SK-N-SH (cell line): ENCODE measurements at regions of chr3 and their contacts with region 1.

Region 1: DNA sequence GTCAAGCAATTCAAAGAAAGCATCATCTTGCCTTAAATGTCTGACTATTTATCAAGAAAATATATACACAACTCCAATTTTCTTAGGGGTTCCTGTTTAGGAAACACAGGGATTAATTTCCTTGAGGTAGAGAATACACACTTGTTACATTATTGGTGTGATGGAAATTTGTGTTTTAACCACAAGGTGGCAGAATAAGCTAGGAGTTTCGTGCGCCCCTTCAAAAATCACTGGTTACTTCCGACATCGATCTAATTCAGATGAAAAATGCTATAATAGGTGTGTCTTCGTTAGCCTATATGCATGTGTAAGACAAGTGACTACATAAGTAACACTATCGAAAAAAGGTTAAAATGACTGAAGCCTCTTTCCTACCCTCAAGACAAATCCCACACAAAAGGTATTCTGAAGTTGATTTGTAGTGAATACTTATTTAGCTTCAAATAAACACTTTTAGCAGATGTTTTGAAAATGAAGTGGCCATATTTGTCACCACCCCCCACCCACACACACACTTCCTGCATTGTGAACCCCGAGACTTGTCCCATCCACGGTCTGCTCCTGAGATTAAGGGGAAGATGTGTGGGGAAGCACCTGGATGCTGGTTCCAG is 246.5 kb downstream of the ROBO1 start:
- DNase-seq: peak; percentile 21
- H3K4me3 ChIP-seq: no peak overlapping the region; a peak in 1 of 4 replicates
- H3K27ac ChIP-seq: no peak overlapping the region
- H3K4me1 ChIP-seq: peaks cover 0 to 3% of the 10 kb centered on the region in 2 experiments; a peak in 2 of 4 replicates
- H3K27me3 ChIP-seq: no peaks in the 10 kb centered on the region
- CTCF ChIP-seq: peak; percentile 75
- EP300 ChIP-seq: no peak
- RAD21 ChIP-seq: peak; percentile 92

Region 2: DNA sequence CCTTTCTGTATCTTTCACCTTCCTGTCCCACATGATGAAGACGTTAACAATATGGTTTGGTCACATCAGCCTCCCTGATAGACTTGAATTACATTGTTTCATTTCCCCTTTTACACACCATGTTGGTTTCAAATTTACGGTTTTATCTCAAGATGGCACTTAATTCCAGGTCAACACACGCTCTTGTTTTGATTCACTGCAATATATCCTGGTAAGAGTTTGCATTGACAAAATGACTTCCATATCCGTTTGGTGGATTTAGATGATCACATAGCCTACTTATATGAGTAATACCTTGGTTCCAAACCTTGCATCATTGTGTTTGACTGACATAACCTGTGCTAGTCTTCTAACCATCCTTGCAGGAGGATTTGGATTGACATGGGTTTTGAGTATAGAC is 252.9 kb before region 1 on chr3:
- CTCF ChIA-PET with region 1: no interaction called
- POLR2A ChIA-PET with region 1: no interaction called
- DNase-seq: no peak
- H3K4me3 ChIP-seq: no peak overlapping the region
- H3K27ac ChIP-seq: no peak overlapping the region
- H3K4me1 ChIP-seq: no peaks in the 10 kb centered on the region
- H3K27me3 ChIP-seq: no peaks in the 10 kb centered on the region
- CTCF ChIP-seq: no peak
- EP300 ChIP-seq: no peak
- RAD21 ChIP-seq: no peak

Region 3: GRCh38 chr3:79497447-79498111 is 23.8 kb before region 1 on chr3:
- CTCF ChIA-PET with region 1: interaction called, 11 read pairs
- POLR2A ChIA-PET with region 1: no interaction called
- DNase-seq: peak; percentile 65
- H3K4me3 ChIP-seq: no peak overlapping the region
- H3K27ac ChIP-seq: no peak overlapping the region
- H3K4me1 ChIP-seq: no peaks in the 10 kb centered on the region
- H3K27me3 ChIP-seq: no peaks in the 10 kb centered on the region
- CTCF ChIP-seq: peak; percentile 88
- EP300 ChIP-seq: no peak
- RAD21 ChIP-seq: peak; percentile 75

Region 4: DNA sequence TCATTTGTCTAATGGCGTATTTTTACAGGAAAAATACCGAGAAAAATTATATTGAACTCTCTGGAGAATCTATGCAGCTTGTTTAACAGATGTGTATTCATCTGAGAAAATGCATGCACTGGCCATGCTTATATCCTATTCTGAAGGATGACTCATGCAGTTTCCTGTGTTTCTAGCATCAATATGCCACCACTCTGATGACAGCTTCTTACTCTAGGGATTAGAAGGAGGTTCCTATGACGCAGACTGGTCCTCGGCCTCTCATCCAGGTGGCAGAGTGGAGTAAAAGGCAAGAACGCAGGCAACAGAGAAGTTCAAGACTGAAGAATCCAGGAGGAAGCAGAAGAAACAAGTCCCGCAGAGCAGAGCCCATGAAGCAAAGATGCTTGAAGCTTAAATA is 1156.5 kb after region 1 on chr3:
- CTCF ChIA-PET with region 1: interaction called, 19 read pairs
- POLR2A ChIA-PET with region 1: no interaction called
- DNase-seq: no peak
- H3K4me3 ChIP-seq: no peak overlapping the region
- H3K27ac ChIP-seq: no peak overlapping the region
- H3K4me1 ChIP-seq: no peaks in the 10 kb centered on the region
- H3K27me3 ChIP-seq: no peaks in the 10 kb centered on the region
- CTCF ChIP-seq: no peak
- EP300 ChIP-seq: no peak
- RAD21 ChIP-seq: no peak

Region 5: GRCh38 chr3:80688814-80689213 is 1167.5 kb after region 1 on chr3:
- CTCF ChIA-PET with region 1: interaction called, 55 read pairs
- POLR2A ChIA-PET with region 1: no interaction called
- DNase-seq: peak; percentile 7
- H3K4me3 ChIP-seq: no peak overlapping the region
- H3K27ac ChIP-seq: no peak overlapping the region
- H3K4me1 ChIP-seq: no peaks in the 10 kb centered on the region
- H3K27me3 ChIP-seq: no peaks in the 10 kb centered on the region
- CTCF ChIP-seq: peak; percentile 52
- EP300 ChIP-seq: no peak
- RAD21 ChIP-seq: peak; percentile 80